ENCODE measurements at regions of chr11 and their contacts with region 1.

Region 1: DNA sequence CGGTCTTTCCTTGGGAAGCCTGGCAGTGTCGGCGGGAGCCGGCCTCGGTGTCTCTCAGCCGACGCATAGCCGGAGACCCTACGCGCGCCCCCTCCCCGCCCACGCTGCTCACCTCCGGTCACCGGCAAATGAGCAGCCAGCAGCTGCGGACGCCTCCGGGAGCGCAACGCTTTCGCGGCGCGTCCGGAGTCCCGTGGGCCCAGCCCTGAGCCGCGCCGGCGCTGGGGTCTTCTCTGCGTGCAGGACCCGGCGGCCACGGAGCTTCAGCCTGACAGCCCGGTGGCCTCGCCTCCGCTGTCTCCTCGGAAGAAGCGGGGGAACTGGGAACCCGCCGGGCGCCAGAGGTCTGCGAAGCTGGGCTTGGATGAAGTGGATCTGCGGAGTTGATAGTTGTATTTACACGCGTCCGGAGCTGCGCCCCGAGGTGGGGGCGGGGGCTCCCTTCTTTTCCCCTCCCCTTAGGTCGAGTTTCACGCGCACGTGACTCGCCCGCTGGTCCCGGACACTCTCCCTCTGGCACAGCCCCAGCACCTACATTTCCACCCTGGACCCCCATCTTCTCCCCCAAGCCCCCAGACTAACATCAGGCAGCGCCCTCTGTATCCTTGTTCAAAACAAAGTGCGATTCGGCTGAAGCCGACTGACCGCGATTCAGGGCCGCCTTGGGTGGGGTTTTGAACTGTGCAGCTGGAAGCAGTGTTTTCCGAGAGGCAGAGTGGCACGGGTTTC is at the start of gene SLC43A1:
- DNase-seq: peak in 5 of 35 experiments; percentile 4 to 17 (median 11)
- ATAC-seq: peak; percentile 34 to 47 (median 38)
- H3K4me3 ChIP-seq: peak within 1 kb of the TSS; percentile 85 to 94
- H3K4me3 Mint-ChIP-seq: peak within 1 kb of the TSS; percentile 96 to 98 (median 98)
- H3K27ac ChIP-seq: peak within 1 kb of the TSS; percentile 56
- H3K27ac Mint-ChIP-seq: peak within 1 kb of the TSS; percentile 81 to 86
- H3K4me1 ChIP-seq: peaks cover 3 to 25% of the 10 kb centered on the region in 2 experiments
- H3K4me1 Mint-ChIP-seq: peaks cover 28 to 32% (median 31%) of the 10 kb centered on the region in 3 donors
- H3K27me3 ChIP-seq: no peaks in the 10 kb centered on the region
- H3K27me3 Mint-ChIP-seq: no peaks in the 10 kb centered on the region
- total RNA-seq, gene SLC43A1: 8.8 to 31.6 (median 25.1) TPM

Region 2: GRCh38 chr11:57469268-57469667 is 46.2 kb before region 1 on chr11:
- CTCF ChIA-PET with region 1: no interaction called
- POLR2A ChIA-PET with region 1: no interaction called
- DNase-seq: no peak
- ATAC-seq: no peak
- H3K4me3 ChIP-seq: no peak overlapping the region
- H3K4me3 Mint-ChIP-seq: no peak overlapping the region
- H3K27ac ChIP-seq: no peak overlapping the region
- H3K27ac Mint-ChIP-seq: no peak overlapping the region
- H3K4me1 ChIP-seq: peaks cover 0 to 9% of the 10 kb centered on the region in 2 experiments
- H3K4me1 Mint-ChIP-seq: peaks cover 10 to 21% (median 13%) of the 10 kb centered on the region in 3 donors
- H3K27me3 ChIP-seq: peaks cover 0 to 14% of the 10 kb centered on the region in 2 experiments
- H3K27me3 Mint-ChIP-seq: peaks cover 0 to 23% of the 10 kb centered on the region in 2 donors

Region 3: DNA sequence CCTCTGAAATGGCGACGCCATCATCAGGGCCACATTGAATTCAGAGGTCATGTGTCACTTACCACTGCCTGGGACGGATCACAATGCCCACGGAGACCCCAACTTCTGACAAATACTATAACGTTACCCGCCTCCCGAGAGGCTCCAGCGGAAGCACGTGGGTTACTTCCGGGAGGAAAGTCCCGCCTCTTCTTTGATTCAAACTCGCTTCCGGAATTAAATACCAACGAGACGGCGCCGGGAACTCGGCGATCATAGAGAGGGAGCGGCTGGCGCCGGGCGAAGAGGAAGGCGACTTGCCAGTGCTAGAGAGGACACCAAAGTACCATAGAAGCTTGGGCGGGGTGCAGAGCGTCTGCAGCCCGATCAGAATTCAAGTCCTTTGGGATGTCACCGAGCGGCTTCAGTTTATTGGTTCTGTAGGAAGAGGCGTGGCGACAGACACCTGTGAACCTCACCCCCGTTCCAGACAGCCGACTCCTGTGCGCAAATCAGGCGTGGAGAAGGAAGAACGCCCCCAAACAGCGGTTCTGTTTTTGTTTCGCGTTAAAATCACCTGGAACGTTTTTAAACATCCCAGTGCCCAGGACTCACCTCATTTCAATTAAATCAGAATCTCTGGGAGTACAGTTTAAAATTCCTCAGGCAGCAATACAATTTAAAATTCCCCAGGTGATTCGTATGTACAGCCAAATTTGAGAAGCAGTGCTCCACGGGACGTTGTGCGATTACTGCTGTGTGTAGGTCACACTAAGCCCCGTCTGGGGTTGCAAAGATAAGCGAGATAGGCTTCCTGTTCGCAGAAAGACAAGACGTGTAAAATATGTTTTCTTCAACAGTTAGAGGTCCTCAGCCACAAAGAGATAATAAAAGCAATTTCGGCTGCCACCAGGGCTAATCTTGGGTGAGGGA is 15.4 kb after region 1 on chr11 and contains the start of gene TIMM10:
- CTCF ChIA-PET with region 1: interaction called, 10 to 23 read pairs
- POLR2A ChIA-PET with region 1: no interaction called
- DNase-seq: peak; percentile 81 to 97 (median 91)
- ATAC-seq: peak; percentile 94 to 95 (median 94)
- H3K4me3 ChIP-seq: peak within 1 kb of the TSS; percentile 75 to 84
- H3K4me3 Mint-ChIP-seq: peak within 1 kb of the TSS; percentile 89 to 97 (median 91)
- H3K27ac ChIP-seq: peak within 1 kb of the TSS; percentile 83
- H3K27ac Mint-ChIP-seq: peak within 1 kb of the TSS; percentile 96
- H3K4me1 ChIP-seq: peaks cover 10 to 20% of the 10 kb centered on the region in 2 experiments
- H3K4me1 Mint-ChIP-seq: peaks cover 32 to 38% (median 37%) of the 10 kb centered on the region in 3 donors
- H3K27me3 ChIP-seq: no peaks in the 10 kb centered on the region
- H3K27me3 Mint-ChIP-seq: no peaks in the 10 kb centered on the region
- total RNA-seq, gene TIMM10: 20.7 to 33.2 (median 26.2) TPM

Region 4: GRCh38 chr11:57761301-57762234 is 246.1 kb after region 1 on chr11 and contains the start of gene CTNND1:
- CTCF ChIA-PET with region 1: no interaction called
- POLR2A ChIA-PET with region 1: no interaction called
- DNase-seq: no peak
- ATAC-seq: no peak
- H3K4me3 ChIP-seq: peak within 1 kb of the TSS in 1 of 2 donors; percentile 10
- H3K4me3 Mint-ChIP-seq: peak within 1 kb of the TSS in 2 of 3 donors; percentile 37 to 56
- H3K27ac ChIP-seq: no peak within 1 kb of the TSS
- H3K27ac Mint-ChIP-seq: no peak within 1 kb of the TSS
- H3K4me1 ChIP-seq: peaks cover 3 to 14% of the 10 kb centered on the region in 2 experiments
- H3K4me1 Mint-ChIP-seq: peaks cover 13 to 35% (median 14%) of the 10 kb centered on the region in 3 donors
- H3K27me3 ChIP-seq: no peaks in the 10 kb centered on the region
- H3K27me3 Mint-ChIP-seq: no peaks in the 10 kb centered on the region
- total RNA-seq, gene CTNND1: 8.3 to 17.5 (median 12.5) TPM